Sigmoid colon (tissue), 7 donors: ENCODE measurements at regions of chr11 and their contacts with region 1.

Region 1: GRCh38 chr11:72573072-72573854 is 101.0 kb downstream of the PDE2A start:
- DNase-seq: no peak
- H3K4me3 ChIP-seq: no peak overlapping the region
- H3K27ac ChIP-seq: no peak overlapping the region
- H3K4me1 ChIP-seq: no peaks in the 10 kb centered on the region
- H3K27me3 ChIP-seq: no peaks in the 10 kb centered on the region
- CTCF ChIP-seq: peak in 3 of 4 experiments; percentile 14 to 67 (median 50)
- EP300 ChIP-seq: no peak
- POLR2A ChIP-seq: no peak

Region 2: DNA sequence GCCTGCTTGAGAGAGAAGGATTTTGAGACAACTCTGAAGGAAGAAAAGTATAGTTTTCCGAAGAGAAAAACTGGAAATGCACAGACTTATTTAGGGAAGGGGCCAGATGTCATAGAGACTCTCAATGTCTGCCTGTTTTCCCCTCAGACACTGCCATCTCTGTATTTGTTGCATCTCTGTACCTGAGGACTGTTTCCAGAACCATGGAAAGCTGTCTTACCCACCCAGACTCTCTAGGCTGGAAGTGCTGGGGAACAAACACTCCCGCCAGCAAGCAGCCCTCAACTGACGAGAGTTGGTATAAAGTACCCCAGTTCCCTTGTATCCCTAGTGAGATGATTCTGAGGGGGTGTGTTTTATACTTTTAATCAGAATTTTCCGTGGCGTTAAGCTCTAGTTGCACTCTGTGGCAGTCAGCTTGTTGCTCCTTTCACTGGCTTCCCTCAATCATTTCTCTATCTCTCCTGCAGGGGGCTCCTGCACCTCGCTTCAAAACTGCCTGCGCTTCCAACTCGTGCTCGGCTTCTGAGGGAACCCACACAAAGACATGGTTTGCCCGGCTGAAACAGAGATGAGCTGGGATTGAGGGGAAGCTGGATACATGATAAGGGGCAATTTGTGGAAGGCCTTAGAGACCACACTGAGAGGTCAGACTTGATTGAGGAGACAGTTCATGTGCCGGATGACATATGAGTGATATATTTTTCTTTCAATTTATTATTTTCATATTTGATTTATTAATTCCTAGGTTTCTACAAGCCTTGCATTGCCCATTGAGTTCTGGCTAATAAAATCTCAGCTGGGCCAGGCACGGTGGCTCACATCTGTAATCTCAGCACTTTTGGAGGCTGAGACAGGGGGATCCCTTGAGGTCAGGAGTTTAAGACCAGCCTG is 102.0 kb before region 1 on chr11:
- intact Hi-C with region 1: loop called (anchors 5 kb)
- DNase-seq: peak; percentile 83
- H3K4me3 ChIP-seq: no peak overlapping the region
- H3K27ac ChIP-seq: no peak overlapping the region
- H3K4me1 ChIP-seq: peaks cover 0 to 7% (median 3%) of the 10 kb centered on the region in 4 donors
- H3K27me3 ChIP-seq: peaks cover 0 to 12% (median 5%) of the 10 kb centered on the region in 3 donors
- CTCF ChIP-seq: peak; percentile 53 to 75 (median 73)
- EP300 ChIP-seq: no peak
- POLR2A ChIP-seq: no peak

Region 3: DNA sequence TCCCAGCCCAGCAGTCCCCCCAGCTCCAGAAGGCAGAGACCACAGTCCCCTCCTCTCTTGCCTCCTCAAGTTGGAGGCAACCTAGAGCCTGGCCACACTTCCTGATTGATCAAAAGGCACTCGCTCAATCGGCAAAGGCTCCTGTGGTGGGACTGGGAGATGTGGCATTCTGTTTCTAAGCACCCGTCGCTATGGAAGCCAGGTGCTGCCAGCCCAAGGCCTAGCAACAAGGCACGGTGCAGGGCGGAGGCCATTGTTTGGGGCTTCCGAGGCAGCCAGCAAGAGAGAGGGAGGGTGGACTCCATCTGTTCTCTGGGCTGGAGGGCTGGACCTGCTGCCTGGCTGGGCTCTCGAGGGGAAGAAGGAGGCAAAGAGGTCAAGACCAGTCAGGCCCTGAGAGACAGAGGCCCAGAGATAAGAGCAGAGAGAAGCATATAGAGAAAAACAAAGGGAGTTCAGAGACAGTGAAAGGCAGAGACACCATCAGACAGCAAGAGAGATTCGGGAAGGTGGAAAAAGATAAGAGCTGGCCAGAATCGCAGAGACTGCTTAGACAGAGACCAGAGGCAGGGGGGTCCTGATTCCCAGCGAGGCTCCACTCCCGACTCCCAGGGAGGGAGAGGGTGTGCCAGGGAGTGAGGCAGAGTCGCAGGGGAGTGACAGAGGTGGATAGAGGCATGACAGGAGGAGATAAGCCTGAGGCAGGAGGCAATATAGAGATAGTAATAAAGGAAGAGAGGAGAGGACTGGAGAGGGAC is 79.8 kb after region 1 on chr11:
- intact Hi-C with region 1: no loop called
- DNase-seq: no peak
- H3K4me3 ChIP-seq: no peak overlapping the region
- H3K27ac ChIP-seq: no peak overlapping the region
- H3K4me1 ChIP-seq: no peaks in the 10 kb centered on the region
- H3K27me3 ChIP-seq: no peaks in the 10 kb centered on the region
- CTCF ChIP-seq: no peak
- EP300 ChIP-seq: no peak
- POLR2A ChIP-seq: no peak

Region 4: GRCh38 chr11:72939031-72939430 is 365.8 kb after region 1 on chr11:
- intact Hi-C with region 1: no loop called
- DNase-seq: no peak
- H3K4me3 ChIP-seq: no peak overlapping the region
- H3K27ac ChIP-seq: no peak overlapping the region
- H3K4me1 ChIP-seq: no peaks in the 10 kb centered on the region
- H3K27me3 ChIP-seq: no peaks in the 10 kb centered on the region
- CTCF ChIP-seq: no peak
- EP300 ChIP-seq: no peak
- POLR2A ChIP-seq: no peak